A673 (cell line): ENCODE measurements at regions of chr4 and their contacts with region 1.

Region 1: DNA sequence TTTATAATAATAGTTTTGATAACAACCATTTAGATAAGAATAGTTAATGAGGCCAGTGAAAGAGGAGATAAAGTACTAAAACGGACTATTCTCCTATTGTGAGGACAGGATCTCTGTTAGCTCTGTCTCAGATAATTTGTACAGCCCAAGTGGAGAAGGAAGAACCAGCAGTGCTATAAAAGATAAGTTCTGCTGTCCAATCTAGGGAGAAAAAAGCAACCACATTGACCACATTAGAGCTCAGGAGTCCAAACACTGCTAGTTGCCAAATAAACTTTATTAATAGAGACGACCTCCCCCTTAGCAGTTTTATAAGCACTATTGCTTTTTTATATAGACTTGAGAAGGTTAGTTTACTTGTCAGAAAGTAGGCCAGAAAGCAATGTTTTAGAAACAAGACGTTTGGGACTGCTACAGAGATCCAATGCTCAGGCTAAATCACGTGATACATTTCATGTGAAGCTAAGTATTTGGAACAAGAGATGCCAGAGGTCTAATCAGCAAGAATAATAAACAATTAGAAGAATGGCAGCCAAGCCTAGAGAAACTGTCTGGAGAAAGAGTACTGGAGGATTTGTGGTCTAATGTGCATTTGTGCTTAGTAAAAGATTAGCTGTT is 15.9 kb downstream of the IL15 start:
- DNase-seq: no peak
- H3K4me3 ChIP-seq: no peak overlapping the region
- H3K27ac ChIP-seq: no peak overlapping the region
- H3K4me1 ChIP-seq: no peaks in the 10 kb centered on the region
- H3K27me3 ChIP-seq: no peaks in the 10 kb centered on the region
- CTCF ChIP-seq: no peak

Region 2: GRCh38 chr4:141922236-141922635 is 270.0 kb after region 1 on chr4:
- CTCF ChIA-PET with region 1: no interaction called
- POLR2A ChIA-PET with region 1: interaction called, 10 read pairs
- intact Hi-C with region 1: no loop called
- DNase-seq: no peak
- H3K4me3 ChIP-seq: no peak overlapping the region
- H3K27ac ChIP-seq: no peak overlapping the region
- H3K4me1 ChIP-seq: no peaks in the 10 kb centered on the region
- H3K27me3 ChIP-seq: peaks cover 10% of the 10 kb centered on the region
- CTCF ChIP-seq: no peak